Activated CD8-positive, alpha-beta T cell treated with anti-CD3 and anti-CD28 coated beads, Interleukin-2, amount 10 ng/mL, durations not matched to agents 7 days and 5 days (primary cell): ENCODE measurements at regions of chr3 and their contacts with region 1.

Region 1: GRCh38 chr3:190321789-190322603 is at the start of gene CLDN1:
- DNase-seq: peak; percentile 77
- ATAC-seq: peak; percentile 98
- H3K4me3 Mint-ChIP-seq: peak within 1 kb of the TSS; percentile 66
- H3K27ac Mint-ChIP-seq: no peak within 1 kb of the TSS
- H3K4me1 Mint-ChIP-seq: peaks cover 9% of the 10 kb centered on the region
- H3K27me3 Mint-ChIP-seq: peaks cover 40% of the 10 kb centered on the region
- total RNA-seq, gene CLDN1: not detected

Region 2: GRCh38 chr3:190224863-190225692 is 96.9 kb before region 1 on chr3:
- CTCF ChIA-PET with region 1: interaction called, 15 read pairs
- POLR2A ChIA-PET with region 1: no interaction called
- DNase-seq: no peak
- ATAC-seq: no peak
- H3K4me3 Mint-ChIP-seq: no peak overlapping the region
- H3K27ac Mint-ChIP-seq: no peak overlapping the region
- H3K4me1 Mint-ChIP-seq: no peaks in the 10 kb centered on the region
- H3K27me3 Mint-ChIP-seq: peaks cover 2% of the 10 kb centered on the region

Region 3: GRCh38 chr3:190265796-190266195 is 56.2 kb before region 1 on chr3:
- CTCF ChIA-PET with region 1: interaction called, 12 read pairs
- POLR2A ChIA-PET with region 1: no interaction called
- DNase-seq: no peak
- ATAC-seq: no peak
- H3K4me3 Mint-ChIP-seq: no peak overlapping the region
- H3K27ac Mint-ChIP-seq: no peak overlapping the region
- H3K4me1 Mint-ChIP-seq: no peaks in the 10 kb centered on the region
- H3K27me3 Mint-ChIP-seq: peaks cover 5% of the 10 kb centered on the region

Region 4: GRCh38 chr3:190306513-190307165 is 15.4 kb before region 1 on chr3:
- CTCF ChIA-PET with region 1: interaction called, 13 read pairs
- POLR2A ChIA-PET with region 1: interaction called, 3 read pairs
- DNase-seq: peak; percentile 23
- ATAC-seq: peak; percentile 91
- H3K4me3 Mint-ChIP-seq: no peak overlapping the region
- H3K27ac Mint-ChIP-seq: no peak overlapping the region
- H3K4me1 Mint-ChIP-seq: peaks cover 16% of the 10 kb centered on the region
- H3K27me3 Mint-ChIP-seq: no peaks in the 10 kb centered on the region

Region 5: GRCh38 chr3:190339130-190339529 is 17.1 kb after region 1 on chr3:
- CTCF ChIA-PET with region 1: interaction called, 16 read pairs
- POLR2A ChIA-PET with region 1: no interaction called
- DNase-seq: no peak
- ATAC-seq: no peak
- H3K4me3 Mint-ChIP-seq: no peak overlapping the region
- H3K27ac Mint-ChIP-seq: no peak overlapping the region
- H3K4me1 Mint-ChIP-seq: peaks cover 9% of the 10 kb centered on the region
- H3K27me3 Mint-ChIP-seq: no peaks in the 10 kb centered on the region

Region 6: DNA sequence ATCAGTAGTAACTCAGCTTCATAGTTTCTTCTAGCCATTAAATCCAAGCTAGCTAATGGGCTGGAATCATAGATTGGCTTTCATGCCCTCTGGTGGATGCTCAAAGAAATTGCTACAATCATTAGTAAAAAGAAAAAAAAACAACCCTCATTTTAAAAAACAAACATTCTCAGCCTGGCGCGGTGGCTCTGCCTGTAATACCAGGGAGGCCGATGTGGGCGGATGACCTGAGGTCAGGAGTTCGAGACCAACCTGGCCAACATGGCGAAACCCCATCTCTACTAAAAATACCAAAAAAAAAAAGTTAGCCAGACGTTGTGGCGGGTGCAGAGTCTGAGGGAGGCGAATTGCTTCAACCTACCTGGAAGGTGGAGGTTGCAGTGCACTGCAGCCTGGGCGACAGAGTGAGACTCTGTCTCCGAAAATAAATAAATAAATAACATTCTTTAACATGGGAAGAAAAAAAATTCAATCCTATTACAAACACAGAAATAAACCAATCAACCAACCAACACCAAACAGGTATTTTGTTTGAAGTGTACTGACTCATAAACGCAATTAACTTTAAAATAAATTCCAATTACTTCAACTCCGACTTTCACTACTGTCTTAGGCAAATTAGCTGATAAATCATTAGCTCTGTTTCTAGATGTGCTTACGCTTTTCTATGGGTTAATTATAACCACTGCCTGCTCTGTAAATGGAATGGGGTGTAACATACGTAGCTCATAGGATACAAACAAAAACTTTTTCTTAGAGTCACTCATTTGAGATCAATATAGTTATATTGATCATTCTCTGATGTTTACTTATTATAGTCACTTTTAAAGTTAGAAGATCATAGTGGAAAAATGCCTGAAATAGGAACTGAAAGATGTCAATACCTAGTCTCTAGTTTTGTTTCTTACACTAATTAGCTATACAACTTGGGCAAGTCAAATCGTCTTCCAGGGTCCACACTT is 102.8 kb after region 1 on chr3:
- CTCF ChIA-PET with region 1: interaction called, 10 read pairs
- POLR2A ChIA-PET with region 1: no interaction called
- DNase-seq: peak; percentile 34
- ATAC-seq: peak; percentile 39
- H3K4me3 Mint-ChIP-seq: no peak overlapping the region
- H3K27ac Mint-ChIP-seq: no peak overlapping the region
- H3K4me1 Mint-ChIP-seq: peaks cover 4% of the 10 kb centered on the region
- H3K27me3 Mint-ChIP-seq: no peaks in the 10 kb centered on the region

Region 7: DNA sequence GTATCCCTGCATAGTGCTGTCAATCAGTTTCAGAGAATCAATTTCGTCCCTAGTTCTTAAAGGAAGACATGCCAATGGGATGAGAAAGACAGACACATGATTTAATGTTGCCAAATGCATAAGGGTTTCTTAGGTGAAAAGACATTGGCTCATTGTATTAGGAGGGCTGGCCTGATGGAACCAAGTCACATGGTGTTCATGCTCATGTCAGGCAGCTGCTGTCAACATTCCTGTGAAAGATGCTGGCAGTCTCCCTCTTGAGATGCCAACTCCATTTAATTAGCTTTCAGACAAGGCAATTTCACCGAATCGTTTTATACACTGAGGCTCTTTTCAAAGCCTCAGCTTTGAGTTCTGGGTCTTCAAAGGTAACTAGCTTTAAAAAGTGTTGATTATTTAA is 175.8 kb after region 1 on chr3:
- CTCF ChIA-PET with region 1: no interaction called
- POLR2A ChIA-PET with region 1: no interaction called
- DNase-seq: no peak
- ATAC-seq: no peak
- H3K4me3 Mint-ChIP-seq: no peak overlapping the region
- H3K27ac Mint-ChIP-seq: no peak overlapping the region
- H3K4me1 Mint-ChIP-seq: no peaks in the 10 kb centered on the region
- H3K27me3 Mint-ChIP-seq: peaks cover 32% of the 10 kb centered on the region